A549 (cell line): ENCODE measurements at regions of chr19 and their contacts with region 1.

Region 1: DNA sequence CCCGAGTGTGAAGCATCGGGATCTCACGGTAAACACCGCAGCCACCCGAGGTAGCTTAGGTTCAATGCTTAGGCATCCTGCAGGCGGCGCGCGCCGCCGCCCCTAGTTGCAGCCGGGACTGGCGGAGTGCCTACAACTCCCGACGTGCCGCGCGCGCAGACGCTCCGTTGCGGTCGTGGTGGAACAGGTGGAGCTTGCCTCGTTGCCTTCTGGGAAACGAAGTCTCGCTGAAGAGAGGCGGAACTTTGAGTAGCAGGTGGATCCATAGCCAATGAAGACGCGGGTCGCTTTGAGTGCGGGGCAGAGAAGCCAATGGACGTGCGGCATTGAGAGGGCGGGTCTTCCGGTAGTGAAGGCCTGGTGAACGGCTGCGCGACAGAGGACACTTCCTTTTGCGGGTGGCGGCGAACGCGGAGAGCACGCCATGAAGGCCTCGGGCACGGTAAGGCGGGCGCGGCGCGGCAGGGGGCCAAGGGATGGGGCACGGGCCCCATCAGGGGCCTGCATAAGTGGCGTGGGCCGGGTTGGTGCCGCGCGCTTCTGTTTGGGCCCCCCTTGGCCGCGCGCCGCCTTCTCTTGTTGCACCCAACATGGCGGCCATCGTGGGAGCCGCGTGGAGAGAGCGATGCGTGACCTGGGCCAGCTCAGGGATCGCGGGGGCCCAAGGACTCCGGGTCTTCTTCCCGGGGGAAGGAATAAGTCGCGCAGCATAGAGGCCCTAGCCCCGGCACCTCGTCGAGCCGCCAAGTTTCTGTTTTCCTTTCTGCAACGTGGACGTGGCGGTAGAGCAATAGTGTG is at the start of gene RPL18A:
- DNase-seq: peak; percentile 91 to 99
- ATAC-seq: peak; percentile 89 to 93
- H3K4me3 ChIP-seq: peak within 1 kb of the TSS; percentile 99
- H3K27ac ChIP-seq: peak within 1 kb of the TSS; percentile 99 to 100
- H3K4me1 ChIP-seq: peaks cover 33% of the 10 kb centered on the region
- CTCF ChIP-seq: peak; percentile 71
- EP300 ChIP-seq: no peak
- POLR2A ChIP-seq: peak; percentile 68
- RAD21 ChIP-seq: peak; percentile 44 to 57
- polyA plus RNA-seq, gene RPL18A: 624 and 696 TPM in 2 replicates

Region 2: GRCh38 chr19:17496337-17496997 is 363.3 kb before region 1 on chr19:
- CTCF ChIA-PET with region 1: interaction called, 10 read pairs
- POLR2A ChIA-PET with region 1: no interaction called
- DNase-seq: peak; percentile 66 to 84
- ATAC-seq: peak; percentile 92 to 97
- H3K4me3 ChIP-seq: no peak overlapping the region
- H3K27ac ChIP-seq: no peak overlapping the region
- H3K4me1 ChIP-seq: peaks cover 7% of the 10 kb centered on the region; the same call in 1 of the 3 replicates
- CTCF ChIP-seq: peak; percentile 80
- EP300 ChIP-seq: no peak
- POLR2A ChIP-seq: no peak
- RAD21 ChIP-seq: peak; percentile 43 to 47

Region 3: DNA sequence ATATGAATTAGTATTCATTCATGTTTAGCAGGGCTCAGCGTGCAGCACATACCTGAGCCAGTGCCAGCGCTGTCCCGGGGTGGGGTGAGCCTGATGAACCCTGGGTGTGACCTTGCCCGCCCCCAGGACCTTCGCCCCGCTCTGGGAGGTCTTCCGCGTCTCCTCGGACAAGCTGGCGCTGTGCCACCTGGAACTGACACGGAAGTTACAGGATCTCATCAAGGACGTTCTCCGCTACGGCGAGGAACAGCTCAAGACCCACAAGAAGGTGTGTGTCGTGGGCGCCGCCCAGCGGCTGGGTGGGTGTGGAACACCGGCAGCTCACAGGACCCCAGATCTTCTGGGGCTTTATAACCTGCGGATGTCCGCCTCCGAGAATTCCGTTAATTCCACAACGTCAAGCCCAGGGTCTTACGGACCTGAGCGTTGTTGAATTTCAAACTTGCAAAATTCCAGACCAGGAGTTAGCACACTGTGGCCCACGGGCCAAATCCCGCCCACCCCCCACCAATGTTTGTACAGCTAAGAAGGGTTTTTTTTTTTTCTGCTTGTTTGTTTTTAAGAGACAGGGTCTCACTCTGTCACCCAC is 93.1 kb before region 1 on chr19:
- CTCF ChIA-PET with region 1: interaction called, 10 read pairs
- POLR2A ChIA-PET with region 1: interaction called, 4 read pairs
- DNase-seq: peak; percentile 64 to 97
- ATAC-seq: peak; percentile 83 to 89
- H3K4me3 ChIP-seq: peak overlapping the region; percentile 24; the same call in 2 of the 3 replicates
- H3K27ac ChIP-seq: peak overlapping the region; percentile 84 to 94
- H3K4me1 ChIP-seq: peaks cover 28% of the 10 kb centered on the region
- CTCF ChIP-seq: peak; percentile 83
- EP300 ChIP-seq: peak in 1 of 2 experiments; percentile 66; a peak in 1 of 5 replicates
- POLR2A ChIP-seq: no peak
- RAD21 ChIP-seq: peak; percentile 91 to 94

Region 4: GRCh38 chr19:17794731-17795536 is 64.8 kb before region 1 on chr19 and contains the start of gene B3GNT3:
- CTCF ChIA-PET with region 1: interaction called, 15 read pairs
- POLR2A ChIA-PET with region 1: interaction called, 4 read pairs
- DNase-seq: peak; percentile 47 to 72
- ATAC-seq: peak; percentile 60 to 65
- H3K4me3 ChIP-seq: peak within 1 kb of the TSS; percentile 50
- H3K27ac ChIP-seq: peak within 1 kb of the TSS; percentile 85 to 91
- H3K4me1 ChIP-seq: peaks cover 52% of the 10 kb centered on the region
- CTCF ChIP-seq: no peak
- EP300 ChIP-seq: no peak
- POLR2A ChIP-seq: no peak
- RAD21 ChIP-seq: no peak
- polyA plus RNA-seq, gene B3GNT3: 2.7 and 4.8 TPM in 2 replicates

Region 5: GRCh38 chr19:17835182-17836006 is 24.3 kb before region 1 on chr19:
- CTCF ChIA-PET with region 1: interaction called, 19 read pairs
- POLR2A ChIA-PET with region 1: interaction called, 9 read pairs
- DNase-seq: no peak
- ATAC-seq: no peak
- H3K4me3 ChIP-seq: no peak overlapping the region
- H3K27ac ChIP-seq: no peak overlapping the region
- H3K4me1 ChIP-seq: no peaks in the 10 kb centered on the region
- CTCF ChIP-seq: no peak
- EP300 ChIP-seq: no peak
- POLR2A ChIP-seq: no peak
- RAD21 ChIP-seq: no peak

Region 6: GRCh38 chr19:17841810-17842662 is 17.7 kb before region 1 on chr19:
- CTCF ChIA-PET with region 1: interaction called, 19 read pairs
- POLR2A ChIA-PET with region 1: interaction called, 17 read pairs
- DNase-seq: peak; percentile 91 to 95
- ATAC-seq: peak; percentile 85 to 93
- H3K4me3 ChIP-seq: peak overlapping the region; percentile 47
- H3K27ac ChIP-seq: peak overlapping the region; percentile 74 to 89
- H3K4me1 ChIP-seq: peaks cover 6% of the 10 kb centered on the region
- CTCF ChIP-seq: no peak
- EP300 ChIP-seq: no peak
- POLR2A ChIP-seq: peak; percentile 63
- RAD21 ChIP-seq: no peak

Region 7: DNA sequence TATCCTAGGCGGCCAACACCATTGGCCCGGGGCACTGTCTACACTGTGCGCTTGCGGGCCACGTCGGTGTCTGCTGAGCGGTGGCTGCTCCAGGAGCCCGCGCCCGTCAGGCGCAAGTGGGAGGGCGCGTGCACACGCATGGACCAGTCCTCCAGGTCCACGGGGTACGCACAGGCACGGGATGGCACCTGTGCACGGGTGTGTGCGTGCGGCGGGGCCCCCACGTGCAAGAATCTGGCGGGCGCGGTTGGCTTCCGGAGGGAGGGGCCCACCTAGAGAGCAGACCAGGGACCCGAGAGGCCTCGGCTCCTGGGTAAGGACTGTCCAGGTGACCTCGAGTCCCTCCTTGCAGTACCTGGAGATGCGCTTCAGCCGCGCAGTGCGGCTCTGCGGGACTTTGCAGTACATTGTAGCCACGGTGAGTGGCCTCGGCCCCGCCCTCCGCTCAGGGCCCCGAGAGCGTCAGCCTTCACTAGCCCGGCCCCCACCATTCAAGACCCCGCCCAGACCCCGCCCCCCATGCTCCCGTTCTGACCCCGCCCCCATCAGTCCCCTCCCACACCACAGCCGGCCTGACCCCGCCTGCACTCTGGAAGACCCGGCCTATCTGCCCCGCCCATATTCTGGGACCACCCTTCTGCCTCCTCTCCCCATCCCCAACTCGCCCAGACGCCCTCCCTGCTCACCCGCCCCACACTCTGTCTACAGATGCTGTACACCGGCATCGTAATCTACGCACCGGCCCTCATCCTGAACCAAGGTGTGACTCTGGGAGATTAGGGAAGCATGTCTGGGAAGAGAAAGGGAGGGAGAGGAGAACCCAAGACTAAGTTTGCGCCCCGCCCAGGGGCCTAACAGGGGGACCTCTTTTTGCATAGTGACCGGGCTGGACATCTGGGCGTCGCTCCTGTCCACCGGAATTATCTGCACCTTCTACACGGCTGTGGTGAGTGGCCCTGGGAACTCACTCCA is 14.3 kb after region 1 on chr19:
- CTCF ChIA-PET with region 1: interaction called, 9 read pairs
- POLR2A ChIA-PET with region 1: interaction called, 16 read pairs
- DNase-seq: peak; percentile 49 to 69
- ATAC-seq: peak; percentile 74 to 81
- H3K4me3 ChIP-seq: peak overlapping the region; percentile 52
- H3K27ac ChIP-seq: peak overlapping the region; percentile 65 to 80
- H3K4me1 ChIP-seq: no peaks in the 10 kb centered on the region
- CTCF ChIP-seq: no peak
- EP300 ChIP-seq: no peak
- POLR2A ChIP-seq: 0 out of 2 replicates have a peak, but pooled peaks have one; percentile 19
- RAD21 ChIP-seq: no peak